Uterus (tissue), 4 donors: ENCODE measurements at regions of chr3 and their contacts with region 1.

Region 1: GRCh38 chr3:170414202-170414663 is 4.4 kb upstream of the CLDN11 start:
- DNase-seq: peak; percentile 45 to 75
- H3K4me3 ChIP-seq: no peak overlapping the region
- H3K27ac ChIP-seq: peak overlapping the region in 1 of 2 donors; percentile 24
- H3K4me1 ChIP-seq: no peaks in the 10 kb centered on the region
- H3K27me3 ChIP-seq: no peaks in the 10 kb centered on the region
- CTCF ChIP-seq: peak; percentile 82 to 94 (median 92)
- POLR2A ChIP-seq: no peak

Region 2: GRCh38 chr3:170055209-170055608 is 359.0 kb before region 1 on chr3:
- intact Hi-C with region 1: no loop called
- DNase-seq: no peak
- H3K4me3 ChIP-seq: no peak overlapping the region
- H3K27ac ChIP-seq: no peak overlapping the region
- H3K4me1 ChIP-seq: no peaks in the 10 kb centered on the region
- H3K27me3 ChIP-seq: no peaks in the 10 kb centered on the region
- CTCF ChIP-seq: no peak
- POLR2A ChIP-seq: no peak

Region 3: GRCh38 chr3:170357176-170357919 is 56.9 kb before region 1 on chr3 and contains the start of gene SKIL:
- intact Hi-C with region 1: loop called (anchors 5 kb)
- DNase-seq: peak; percentile 96 to 98
- H3K4me3 ChIP-seq: peak within 1 kb of the TSS; percentile 78 to 93
- H3K27ac ChIP-seq: peak within 1 kb of the TSS; percentile 95 to 98
- H3K4me1 ChIP-seq: peaks cover 3 to 4% of the 10 kb centered on the region in 2 donors
- H3K27me3 ChIP-seq: no peaks in the 10 kb centered on the region
- CTCF ChIP-seq: peak in 2 of 4 experiments; percentile 18 to 36
- POLR2A ChIP-seq: peak; percentile 68 to 89
- total RNA-seq, gene SKIL: 34.3 to 143 (median 51.2) TPM

Region 4: GRCh38 chr3:170811928-170812591 is 397.8 kb after region 1 on chr3:
- intact Hi-C with region 1: loop called (anchors 5 kb)
- DNase-seq: peak; percentile 70 to 82
- H3K4me3 ChIP-seq: no peak overlapping the region
- H3K27ac ChIP-seq: peak overlapping the region; percentile 62 to 74
- H3K4me1 ChIP-seq: peaks cover 0 to 9% of the 10 kb centered on the region in 2 donors
- H3K27me3 ChIP-seq: no peaks in the 10 kb centered on the region
- CTCF ChIP-seq: peak; percentile 77 to 87 (median 84)
- POLR2A ChIP-seq: no peak